Endothelial cell of umbilical vein (primary cell): ENCODE measurements at regions of chr9 and their contacts with region 1.

Region 1: DNA sequence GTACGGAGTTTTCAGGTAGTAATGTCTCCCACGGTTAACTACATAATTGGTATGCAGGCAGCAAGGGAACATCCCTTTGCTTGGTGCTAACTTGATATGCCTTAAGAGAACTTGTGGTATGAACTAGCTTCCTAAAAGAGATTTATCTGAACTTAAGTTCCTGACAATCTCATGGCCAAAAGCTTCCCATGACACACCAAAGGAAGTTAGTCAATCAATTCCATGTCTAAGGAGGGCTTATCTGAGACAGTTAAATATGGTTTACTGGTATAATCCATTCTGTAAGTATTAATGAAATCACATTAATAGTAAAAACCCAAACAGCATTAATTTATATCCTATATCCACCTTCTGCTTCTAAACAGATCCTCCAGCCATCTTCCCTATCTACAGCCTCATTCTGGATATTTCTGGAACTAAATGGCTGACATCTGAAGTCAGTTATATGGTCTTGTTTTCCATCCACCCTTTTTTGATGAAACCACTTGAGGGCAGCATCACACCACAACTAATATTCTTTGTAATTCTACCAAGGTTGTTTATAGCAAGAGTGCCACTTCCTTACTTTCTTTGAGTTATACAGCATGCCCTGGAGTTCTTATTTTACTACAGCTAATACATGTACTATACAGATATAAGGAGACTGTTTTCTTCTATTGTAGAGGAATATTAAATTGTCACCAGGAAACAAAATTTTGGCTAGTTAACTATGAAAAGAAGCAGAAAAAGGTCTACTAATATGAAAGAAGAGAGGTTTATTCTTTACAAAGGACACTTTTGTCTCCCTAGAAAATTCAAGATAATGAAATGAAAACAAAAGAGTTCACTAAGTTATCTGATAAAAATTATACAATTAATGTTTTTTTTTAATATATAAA is 34.7 kb downstream of the SHOC1 start:
- DNase-seq: peak; percentile 95
- H3K4me3 ChIP-seq: no peak overlapping the region
- H3K27ac ChIP-seq: peak overlapping the region; percentile 51
- H3K4me1 ChIP-seq: peaks cover 12% of the 10 kb centered on the region
- H3K27me3 ChIP-seq: no peaks in the 10 kb centered on the region
- CTCF ChIP-seq: peak; percentile 38 to 40
- POLR2A ChIP-seq: no peak

Region 2: DNA sequence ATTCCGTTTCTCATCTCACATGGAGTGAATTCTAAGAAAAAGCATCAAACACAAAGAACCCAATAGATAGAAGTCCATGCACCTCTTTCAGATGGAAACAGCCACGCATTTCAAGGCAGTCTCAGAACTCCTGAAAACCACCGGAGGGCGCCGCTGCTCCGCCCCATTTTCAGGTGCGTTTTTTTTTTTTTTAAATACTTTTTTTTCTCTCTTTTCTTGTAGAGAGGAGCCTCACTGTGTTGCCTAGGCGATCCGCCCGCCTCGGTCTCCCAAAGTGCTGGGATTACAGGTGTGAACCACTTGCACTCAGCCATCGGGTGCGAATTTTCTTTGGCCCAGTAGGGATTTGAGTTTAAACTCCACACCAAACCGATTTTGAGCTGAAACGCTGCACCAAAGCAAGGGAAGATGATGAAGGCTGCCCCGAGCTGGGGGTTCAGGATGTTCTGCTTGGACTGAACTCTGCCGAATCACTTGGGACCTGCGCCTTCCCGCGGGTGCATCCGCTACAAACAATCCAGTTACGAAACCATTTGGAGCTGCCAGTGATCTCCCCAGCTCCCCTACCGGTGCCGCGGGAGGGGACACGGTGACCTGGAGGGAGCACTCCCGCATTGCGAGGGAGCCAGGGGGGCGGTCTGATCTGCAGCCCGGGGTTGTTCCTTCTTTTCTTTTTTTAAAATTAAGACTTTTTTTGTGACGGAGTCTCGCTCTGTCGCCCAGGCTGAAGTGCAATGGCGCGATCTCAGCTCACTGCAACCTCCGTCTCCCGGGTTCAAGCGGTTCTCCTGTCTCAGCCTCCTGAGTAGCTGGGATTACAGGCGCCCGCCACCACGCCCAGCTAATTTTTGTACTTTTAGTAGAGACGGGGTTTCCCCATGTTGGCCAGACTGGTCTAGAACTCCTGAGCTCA is 161.9 kb before region 1 on chr9:
- CTCF ChIA-PET with region 1: interaction called, 11 read pairs
- POLR2A ChIA-PET with region 1: no interaction called
- dilution Hi-C with region 1: no loop called
- intact Hi-C with region 1: loop called (anchors 1 kb)
- DNase-seq: peak; percentile 81
- H3K4me3 ChIP-seq: peak overlapping the region; percentile 72 to 91 (median 90)
- H3K27ac ChIP-seq: peak overlapping the region; percentile 87
- H3K4me1 ChIP-seq: peaks cover 36% of the 10 kb centered on the region
- H3K27me3 ChIP-seq: no peaks in the 10 kb centered on the region
- CTCF ChIP-seq: peak; percentile 68 to 72
- POLR2A ChIP-seq: no peak

Region 3: DNA sequence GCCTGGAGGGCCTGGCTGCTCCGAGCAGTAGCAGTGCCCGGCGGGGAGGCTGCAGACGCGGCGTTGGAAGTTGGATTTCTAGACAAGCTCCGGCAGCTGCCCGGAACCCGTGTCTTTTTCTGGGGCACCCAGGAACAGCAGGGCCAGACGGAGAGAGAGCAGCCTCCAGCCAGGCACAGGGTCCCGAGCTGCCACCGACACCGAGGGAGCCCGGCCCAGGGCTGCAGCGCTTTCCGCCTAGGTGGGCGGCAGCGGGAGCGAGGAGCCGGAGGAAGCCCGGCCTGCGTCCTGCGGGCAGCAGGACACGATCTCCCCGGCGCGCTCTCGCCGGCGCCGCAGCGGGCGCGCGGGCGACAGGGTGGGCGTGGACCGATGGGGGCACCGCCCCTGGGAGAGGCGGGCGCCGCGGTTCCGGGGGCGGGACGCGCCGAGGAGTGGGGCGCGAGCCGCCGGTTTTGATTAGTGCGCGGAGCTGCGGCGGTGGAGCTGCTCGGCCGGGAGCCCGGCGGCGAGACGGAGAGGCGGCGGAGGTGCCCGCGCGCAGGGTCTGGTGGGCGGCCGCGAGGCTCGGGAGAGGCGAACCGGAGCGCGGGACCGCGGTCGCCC is 136.5 kb after region 1 on chr9 and contains the start of gene UGCG:
- CTCF ChIA-PET with region 1: interaction called, 4 read pairs
- POLR2A ChIA-PET with region 1: no interaction called
- dilution Hi-C with region 1: no loop called
- intact Hi-C with region 1: loop called (anchors 1 kb)
- DNase-seq: peak; percentile 92
- H3K4me3 ChIP-seq: peak within 1 kb of the TSS; percentile 81 to 96 (median 90)
- H3K27ac ChIP-seq: peak within 1 kb of the TSS; percentile 82
- H3K4me1 ChIP-seq: peaks cover 23% of the 10 kb centered on the region
- H3K27me3 ChIP-seq: no peaks in the 10 kb centered on the region
- CTCF ChIP-seq: no peak
- POLR2A ChIP-seq: peak; percentile 95
- total RNA-seq, gene UGCG: 29.9 and 38.5 TPM in 2 replicates

Region 4: GRCh38 chr9:111916234-111916645 is 156.2 kb after region 1 on chr9:
- CTCF ChIA-PET with region 1: no interaction called
- POLR2A ChIA-PET with region 1: no interaction called
- dilution Hi-C with region 1: no loop called
- intact Hi-C with region 1: no loop called
- DNase-seq: no peak
- H3K4me3 ChIP-seq: no peak overlapping the region
- H3K27ac ChIP-seq: no peak overlapping the region
- H3K4me1 ChIP-seq: peaks cover 11% of the 10 kb centered on the region
- H3K27me3 ChIP-seq: no peaks in the 10 kb centered on the region
- CTCF ChIP-seq: no peak
- POLR2A ChIP-seq: no peak

Region 5: GRCh38 chr9:111957856-111958652 is 198.1 kb after region 1 on chr9:
- CTCF ChIA-PET with region 1: interaction called, 7 read pairs
- POLR2A ChIA-PET with region 1: no interaction called
- dilution Hi-C with region 1: no loop called
- intact Hi-C with region 1: loop called (anchors 1 kb)
- DNase-seq: peak; percentile 96
- H3K4me3 ChIP-seq: peak overlapping the region in 1 of 3 experiments; percentile 6
- H3K27ac ChIP-seq: peak overlapping the region; percentile 89
- H3K4me1 ChIP-seq: peaks cover 43% of the 10 kb centered on the region
- H3K27me3 ChIP-seq: no peaks in the 10 kb centered on the region
- CTCF ChIP-seq: no peak
- POLR2A ChIP-seq: peak; percentile 79

Region 6: GRCh38 chr9:112020680-112021596 is 260.9 kb after region 1 on chr9:
- CTCF ChIA-PET with region 1: interaction called, 10 read pairs
- POLR2A ChIA-PET with region 1: no interaction called
- dilution Hi-C with region 1: no loop called
- intact Hi-C with region 1: loop called (anchors 2 kb)
- DNase-seq: peak; percentile 74
- H3K4me3 ChIP-seq: no peak overlapping the region
- H3K27ac ChIP-seq: peak overlapping the region; percentile 64
- H3K4me1 ChIP-seq: peaks cover 24% of the 10 kb centered on the region
- H3K27me3 ChIP-seq: no peaks in the 10 kb centered on the region
- CTCF ChIP-seq: no peak
- POLR2A ChIP-seq: no peak

Region 7: DNA sequence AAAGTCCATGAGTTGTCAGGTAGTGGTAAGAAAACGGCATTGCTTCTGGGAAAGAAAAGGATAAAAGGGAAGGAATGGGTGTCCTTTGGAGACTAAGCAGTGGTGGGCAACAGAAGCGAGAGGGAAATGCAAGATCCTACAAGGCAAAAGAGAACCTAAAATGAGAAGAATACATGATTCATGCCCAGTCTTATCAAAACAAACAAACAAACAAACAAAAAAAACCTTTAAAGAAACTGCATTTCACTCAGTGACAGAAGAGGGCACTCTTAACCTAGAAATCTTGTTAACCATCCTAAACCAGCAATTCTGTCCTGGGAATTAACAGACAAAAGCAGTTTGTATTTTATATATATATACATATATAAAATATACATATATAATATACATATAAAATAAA is 326.6 kb after region 1 on chr9:
- CTCF ChIA-PET with region 1: interaction called, 19 read pairs
- POLR2A ChIA-PET with region 1: no interaction called
- dilution Hi-C with region 1: no loop called
- intact Hi-C with region 1: no loop called
- DNase-seq: peak; percentile 48
- H3K4me3 ChIP-seq: no peak overlapping the region
- H3K27ac ChIP-seq: no peak overlapping the region
- H3K4me1 ChIP-seq: peaks cover 10% of the 10 kb centered on the region
- H3K27me3 ChIP-seq: no peaks in the 10 kb centered on the region
- CTCF ChIP-seq: peak; percentile 21 to 34
- POLR2A ChIP-seq: no peak

Region 8: GRCh38 chr9:112333639-112334431 is 573.8 kb after region 1 on chr9:
- CTCF ChIA-PET with region 1: no interaction called
- POLR2A ChIA-PET with region 1: no interaction called
- dilution Hi-C with region 1: no loop called
- intact Hi-C with region 1: loop called (anchors 2 kb)
- DNase-seq: peak; percentile 94
- H3K4me3 ChIP-seq: peak overlapping the region; percentile 71 to 95 (median 88)
- H3K27ac ChIP-seq: peak overlapping the region; percentile 87
- H3K4me1 ChIP-seq: peaks cover 18% of the 10 kb centered on the region
- H3K27me3 ChIP-seq: no peaks in the 10 kb centered on the region
- CTCF ChIP-seq: peak; percentile 26 to 51
- POLR2A ChIP-seq: no peak